Caco-2 (cell line): ENCODE measurements at regions of chr1 and their contacts with region 1.

Region 1: GRCh38 chr1:32741413-32742198 is 39.0 kb upstream of the SYNC start:
- DNase-seq: peak in 1 of 2 experiments; percentile 57
- H3K4me3 ChIP-seq: peak overlapping the region; percentile 76
- H3K4me3 Mint-ChIP-seq: peak overlapping the region; percentile 76
- H3K27ac Mint-ChIP-seq: peak overlapping the region; percentile 53
- H3K4me1 ChIP-seq: peaks cover 39% of the 10 kb centered on the region
- H3K4me1 Mint-ChIP-seq: peaks cover 12% of the 10 kb centered on the region
- H3K27me3 ChIP-seq: no peaks in the 10 kb centered on the region
- H3K27me3 Mint-ChIP-seq: no peaks in the 10 kb centered on the region
- CTCF ChIP-seq: peak; percentile 37 to 49

Region 2: DNA sequence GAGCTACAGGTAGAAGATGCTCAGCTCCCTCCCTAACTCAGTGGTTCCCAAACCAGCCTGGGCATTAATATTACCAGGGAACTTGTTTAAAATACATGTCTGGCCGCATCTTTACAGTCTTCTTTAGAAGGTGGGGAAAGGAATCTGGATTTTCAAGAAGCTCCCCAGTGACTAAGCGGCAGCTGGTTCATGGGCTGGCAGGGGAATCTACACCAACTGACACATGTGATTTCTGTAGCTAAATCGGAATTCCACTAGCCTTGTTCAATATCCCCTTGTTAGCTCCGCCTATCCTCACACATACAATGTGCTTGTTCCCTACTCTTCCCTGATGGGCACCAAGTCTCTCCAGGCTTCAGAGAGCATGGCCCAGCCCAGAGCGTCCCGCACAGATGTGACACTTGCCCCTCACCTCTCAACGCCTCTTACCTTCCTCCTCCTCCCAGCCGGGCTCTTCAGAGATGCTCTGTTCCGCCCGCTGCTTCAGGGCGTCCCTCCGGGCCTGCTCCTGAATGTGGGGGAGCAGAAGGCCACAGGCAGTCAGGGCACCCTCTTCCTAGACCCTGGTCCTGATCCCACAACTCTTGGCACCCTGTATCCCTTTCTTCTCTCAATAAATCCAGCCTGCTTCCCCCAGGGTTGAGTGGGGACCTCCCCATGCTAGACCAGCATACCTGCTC is 363.9 kb before region 1 on chr1:
- CTCF ChIA-PET with region 1: no interaction called
- POLR2A ChIA-PET with region 1: no interaction called
- intact Hi-C with region 1: no loop called
- DNase-seq: no peak
- H3K4me3 ChIP-seq: no peak overlapping the region
- H3K4me3 Mint-ChIP-seq: no peak overlapping the region
- H3K27ac Mint-ChIP-seq: no peak overlapping the region
- H3K4me1 ChIP-seq: no peaks in the 10 kb centered on the region
- H3K4me1 Mint-ChIP-seq: no peaks in the 10 kb centered on the region
- H3K27me3 ChIP-seq: no peaks in the 10 kb centered on the region
- H3K27me3 Mint-ChIP-seq: no peaks in the 10 kb centered on the region
- CTCF ChIP-seq: no peak

Region 3: GRCh38 chr1:32761253-32761880 is 19.8 kb after region 1 on chr1:
- CTCF ChIA-PET with region 1: interaction called, 3 read pairs
- POLR2A ChIA-PET with region 1: no interaction called
- intact Hi-C with region 1: loop called (anchors 1 kb)
- DNase-seq: peak; percentile 23 to 69
- H3K4me3 ChIP-seq: no peak overlapping the region
- H3K4me3 Mint-ChIP-seq: peak overlapping the region; percentile 62
- H3K27ac Mint-ChIP-seq: peak overlapping the region; percentile 93
- H3K4me1 ChIP-seq: peaks cover 50% of the 10 kb centered on the region
- H3K4me1 Mint-ChIP-seq: peaks cover 46% of the 10 kb centered on the region
- H3K27me3 ChIP-seq: no peaks in the 10 kb centered on the region
- H3K27me3 Mint-ChIP-seq: no peaks in the 10 kb centered on the region
- CTCF ChIP-seq: no peak

Region 4: DNA sequence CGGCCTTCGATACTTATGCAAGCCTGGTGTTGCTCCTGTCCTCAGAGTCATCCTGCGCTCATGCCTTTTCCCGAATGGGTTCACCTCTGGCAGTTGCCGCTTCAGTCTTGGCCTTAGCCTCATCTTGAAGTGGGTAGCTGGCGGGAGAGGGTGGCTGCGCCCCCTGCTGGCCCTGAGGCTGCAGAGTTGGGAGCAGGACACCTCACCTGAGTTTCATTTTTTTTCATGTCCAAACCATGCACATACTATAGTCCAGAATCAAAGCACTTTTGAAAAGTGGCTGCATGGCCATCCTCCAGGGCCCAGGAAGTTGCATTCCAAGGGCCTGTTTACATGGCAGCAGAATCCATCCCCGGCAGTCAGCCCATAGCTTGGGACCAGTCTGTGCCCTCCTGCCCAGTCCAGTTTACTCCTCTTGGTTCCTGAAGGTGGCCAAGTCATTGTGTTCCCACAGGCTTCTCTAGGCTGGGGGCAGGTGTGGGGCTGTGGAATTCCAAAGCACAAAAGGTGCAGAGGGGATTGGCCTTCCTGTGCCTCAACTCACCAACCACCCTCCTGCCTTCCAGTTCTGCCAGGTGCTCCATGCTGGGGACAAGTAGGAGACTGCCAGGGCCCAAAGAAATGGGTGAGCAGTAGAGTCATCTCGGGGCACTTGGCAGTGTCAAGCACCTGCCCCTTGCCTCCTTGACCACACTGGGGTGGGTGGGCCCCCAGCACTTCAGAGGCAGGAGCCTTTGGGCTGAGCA is 31.6 kb after region 1 on chr1:
- CTCF ChIA-PET with region 1: no interaction called
- POLR2A ChIA-PET with region 1: no interaction called
- intact Hi-C with region 1: loop called (anchors 1 kb)
- DNase-seq: peak; percentile 82 to 86
- H3K4me3 ChIP-seq: no peak overlapping the region
- H3K4me3 Mint-ChIP-seq: peak overlapping the region; percentile 35
- H3K27ac Mint-ChIP-seq: peak overlapping the region; percentile 73
- H3K4me1 ChIP-seq: peaks cover 6% of the 10 kb centered on the region; the same call in 1 of the 2 replicates
- H3K4me1 Mint-ChIP-seq: peaks cover 16% of the 10 kb centered on the region
- H3K27me3 ChIP-seq: no peaks in the 10 kb centered on the region
- H3K27me3 Mint-ChIP-seq: no peaks in the 10 kb centered on the region
- CTCF ChIP-seq: peak; percentile 74 to 79